Activated CD4-positive, alpha-beta memory T cell treated with anti-CD3 and anti-CD28 coated beads for 36 hours (primary cell): ENCODE measurements at regions of chr4 and their contacts with region 1.

Region 1: GRCh38 chr4:13541720-13542576 is 2.4 kb downstream of the NKX3-2 start:
- DNase-seq: peak; percentile 53
- H3K4me3 Mint-ChIP-seq: peak overlapping the region; percentile 16
- H3K27ac Mint-ChIP-seq: no peak overlapping the region
- H3K4me1 Mint-ChIP-seq: peaks cover 42% of the 10 kb centered on the region
- H3K27me3 Mint-ChIP-seq: peaks cover 73% of the 10 kb centered on the region

Region 2: GRCh38 chr4:13527981-13528820 is 13.7 kb before region 1 on chr4:
- CTCF ChIA-PET with region 1: interaction called, 12 read pairs
- POLR2A ChIA-PET with region 1: interaction called, 8 read pairs
- intact Hi-C with region 1: loop called (anchors 1 kb)
- DNase-seq: peak; percentile 55
- H3K4me3 Mint-ChIP-seq: peak overlapping the region; percentile 47
- H3K27ac Mint-ChIP-seq: no peak overlapping the region
- H3K4me1 Mint-ChIP-seq: peaks cover 23% of the 10 kb centered on the region
- H3K27me3 Mint-ChIP-seq: peaks cover 81% of the 10 kb centered on the region

Region 3: DNA sequence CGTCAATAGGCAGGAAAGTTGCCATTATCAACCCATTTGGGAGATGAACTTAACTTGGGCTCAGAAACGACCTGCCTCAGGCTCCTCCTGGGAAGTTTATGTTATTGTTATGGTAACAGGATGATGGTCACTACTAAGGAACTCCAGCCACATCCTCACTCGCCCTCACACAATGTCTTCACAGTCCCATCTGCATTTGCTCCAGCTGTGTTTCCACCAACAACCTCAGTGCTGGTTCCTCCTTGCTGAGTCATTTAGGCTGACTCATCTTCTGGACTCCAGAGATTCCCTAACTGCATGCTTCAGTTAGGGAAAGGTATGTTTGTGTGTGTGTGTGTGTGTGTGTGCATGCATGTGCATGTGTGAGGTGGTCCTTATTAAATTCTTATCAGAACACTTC is 379.0 kb after region 1 on chr4:
- CTCF ChIA-PET with region 1: no interaction called
- POLR2A ChIA-PET with region 1: no interaction called
- intact Hi-C with region 1: no loop called
- DNase-seq: no peak
- H3K4me3 Mint-ChIP-seq: no peak overlapping the region
- H3K27ac Mint-ChIP-seq: no peak overlapping the region
- H3K4me1 Mint-ChIP-seq: no peaks in the 10 kb centered on the region
- H3K27me3 Mint-ChIP-seq: no peaks in the 10 kb centered on the region